ENCODE measurements at regions of chr9 and their contacts with region 1.

Region 1: GRCh38 chr9:27033823-27034403 is 28.4 kb upstream of the LRRC19 start:
- DNase-seq: peak in 1 of 6 donors; percentile 36
- ATAC-seq: peak in 3 of 4 donors; percentile 64 to 69 (median 69)
- H3K4me3 ChIP-seq: no peak overlapping the region
- H3K27ac ChIP-seq: no peak overlapping the region
- H3K4me1 ChIP-seq: no peaks in the 10 kb centered on the region
- H3K27me3 ChIP-seq: no peaks in the 10 kb centered on the region
- CTCF ChIP-seq: peak; percentile 18 to 68 (median 48)

Region 2: DNA sequence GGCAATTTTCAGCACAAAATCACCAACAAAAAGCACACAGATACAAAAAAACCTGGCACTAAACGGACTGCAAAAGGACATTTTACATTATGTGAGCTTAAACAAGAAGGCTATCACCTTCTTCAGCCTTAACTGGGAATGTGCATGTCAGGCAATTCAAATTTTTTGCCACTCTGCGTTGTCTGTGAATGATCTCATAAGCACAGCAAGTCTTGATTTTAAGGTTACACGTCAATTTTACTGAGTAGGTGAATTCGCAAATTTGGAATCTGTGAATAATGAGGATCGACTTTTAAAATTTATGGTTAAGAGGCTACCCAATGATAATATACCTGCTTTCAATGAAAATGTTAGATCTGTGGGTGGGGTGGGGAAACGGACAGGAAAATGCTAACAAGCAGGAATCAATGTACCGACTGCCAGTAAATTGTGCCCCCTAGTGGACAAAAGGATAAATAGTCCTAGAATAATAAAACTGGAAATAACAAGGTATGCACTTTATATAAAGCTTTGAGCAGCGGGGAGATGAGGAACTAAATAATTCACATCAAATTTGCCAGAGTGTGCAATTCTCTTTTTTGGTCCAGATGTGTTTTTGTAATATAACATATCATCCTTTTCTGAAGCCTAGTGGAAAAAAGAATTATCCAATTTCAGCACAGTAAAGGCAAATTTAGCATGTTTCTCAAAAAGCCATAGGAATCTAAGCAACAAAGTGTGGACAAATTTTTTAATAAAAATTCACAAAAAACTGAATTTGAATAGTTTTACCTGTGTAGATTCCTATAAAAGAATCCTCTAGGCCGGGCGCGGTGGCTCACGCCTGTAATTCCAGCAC is 242.5 kb after region 1 on chr9:
- intact Hi-C with region 1: loop called in 1 of 3 experiments (anchors 5 kb)
- DNase-seq: peak in 1 of 6 donors; percentile 15
- ATAC-seq: peak; percentile 71 to 89 (median 82)
- H3K4me3 ChIP-seq: no peak overlapping the region
- H3K27ac ChIP-seq: no peak overlapping the region
- H3K4me1 ChIP-seq: no peaks in the 10 kb centered on the region
- H3K27me3 ChIP-seq: no peaks in the 10 kb centered on the region
- CTCF ChIP-seq: peak; percentile 60 to 77 (median 69)

Measured in pancreas (tissue), 10 donors.